Right cardiac atrium (tissue), 5 donors: ENCODE measurements at regions of chr6 and their contacts with region 1.

Region 1: GRCh38 chr6:37566111-37566949 is 66.6 kb upstream of the CCDC167 start:
- DNase-seq: peak; percentile 44 to 84 (median 84)
- ATAC-seq: peak; percentile 87 to 90
- H3K4me3 ChIP-seq: peak overlapping the region; percentile 27
- H3K27ac ChIP-seq: no peak overlapping the region
- H3K4me1 ChIP-seq: peaks cover 2% of the 10 kb centered on the region
- H3K27me3 ChIP-seq: no peaks in the 10 kb centered on the region

Region 2: GRCh38 chr6:37324131-37325033 is 241.9 kb before region 1 on chr6:
- intact Hi-C with region 1: loop called in 1 of 4 experiments (anchors 5 kb)
- DNase-seq: no peak
- ATAC-seq: no peak
- H3K4me3 ChIP-seq: no peak overlapping the region
- H3K27ac ChIP-seq: no peak overlapping the region
- H3K4me1 ChIP-seq: no peaks in the 10 kb centered on the region
- H3K27me3 ChIP-seq: no peaks in the 10 kb centered on the region

Region 3: DNA sequence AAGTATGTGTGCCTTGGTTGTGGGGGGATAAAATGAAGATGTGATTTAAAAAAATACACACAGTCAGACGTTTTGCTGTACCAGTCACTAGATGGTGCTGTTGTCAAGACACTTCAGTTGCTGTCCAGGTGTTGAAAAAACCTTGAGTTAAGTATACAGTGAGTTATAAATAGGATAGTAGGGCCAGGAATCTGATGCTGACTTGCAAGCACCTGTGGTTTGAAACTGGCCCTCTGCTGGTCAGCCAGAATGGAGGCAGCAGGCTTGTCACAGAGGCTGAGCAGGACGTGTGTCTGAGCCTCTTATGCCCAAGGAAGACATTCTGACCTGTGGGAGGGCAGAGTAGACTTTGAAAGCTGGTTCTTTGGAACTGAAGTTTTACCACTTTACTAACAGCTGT is 184.8 kb before region 1 on chr6:
- intact Hi-C with region 1: loop called in 3 of 4 experiments (anchors 5 to 10 kb)
- DNase-seq: no peak
- ATAC-seq: peak; percentile 37 to 51
- H3K4me3 ChIP-seq: no peak overlapping the region
- H3K27ac ChIP-seq: no peak overlapping the region
- H3K4me1 ChIP-seq: no peaks in the 10 kb centered on the region
- H3K27me3 ChIP-seq: no peaks in the 10 kb centered on the region

Region 4: DNA sequence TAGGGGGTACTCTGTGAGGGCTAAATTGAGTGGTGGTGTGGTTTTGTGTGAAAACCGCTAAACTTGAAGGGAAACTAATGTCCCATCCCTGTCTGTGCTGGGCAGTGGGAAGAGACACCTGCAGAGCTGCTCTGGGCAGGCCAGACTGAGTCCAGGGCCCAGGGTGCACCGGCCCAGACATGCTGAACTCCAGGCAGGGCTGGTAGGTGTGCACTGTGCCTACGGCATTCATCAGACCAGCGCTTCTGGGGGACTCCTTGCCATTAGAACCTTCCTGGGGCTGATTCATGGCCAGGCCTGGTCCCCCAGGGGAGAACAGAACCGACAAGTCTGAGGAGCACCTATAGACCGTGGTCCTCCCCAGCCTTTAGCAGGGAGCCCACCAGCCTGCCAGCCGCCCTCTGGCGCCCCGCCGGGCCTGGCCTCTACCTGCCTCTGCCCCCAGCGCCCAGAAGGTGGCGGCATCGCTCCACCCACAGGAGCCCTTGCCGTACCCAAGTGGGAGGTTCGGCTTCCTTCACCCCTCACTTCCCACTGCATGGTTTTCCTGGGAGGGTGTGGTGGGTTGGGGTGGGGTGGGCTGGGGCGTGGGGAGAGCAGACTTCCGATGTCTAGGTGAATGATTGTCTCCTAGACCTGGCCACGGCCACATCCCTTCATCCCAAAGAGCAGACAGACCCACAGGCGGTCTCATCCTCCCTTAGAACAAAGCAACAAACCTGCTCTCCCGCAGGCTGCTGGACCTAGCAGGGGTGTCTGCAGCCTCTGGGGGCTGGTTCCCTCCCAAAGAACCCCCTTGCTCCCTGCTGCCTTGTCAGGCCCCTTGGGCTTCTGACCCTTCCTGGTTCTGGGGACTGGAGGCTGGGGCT is 82.2 kb before region 1 on chr6:
- intact Hi-C with region 1: loop called in 3 of 4 experiments (anchors 5 to 10 kb)
- DNase-seq: peak; percentile 53 to 86 (median 82)
- ATAC-seq: peak; percentile 52 to 65
- H3K4me3 ChIP-seq: no peak overlapping the region
- H3K27ac ChIP-seq: no peak overlapping the region
- H3K4me1 ChIP-seq: peaks cover 8% of the 10 kb centered on the region
- H3K27me3 ChIP-seq: no peaks in the 10 kb centered on the region